ENCODE measurements at regions of chr3 and their contacts with region 1.

Region 1: DNA sequence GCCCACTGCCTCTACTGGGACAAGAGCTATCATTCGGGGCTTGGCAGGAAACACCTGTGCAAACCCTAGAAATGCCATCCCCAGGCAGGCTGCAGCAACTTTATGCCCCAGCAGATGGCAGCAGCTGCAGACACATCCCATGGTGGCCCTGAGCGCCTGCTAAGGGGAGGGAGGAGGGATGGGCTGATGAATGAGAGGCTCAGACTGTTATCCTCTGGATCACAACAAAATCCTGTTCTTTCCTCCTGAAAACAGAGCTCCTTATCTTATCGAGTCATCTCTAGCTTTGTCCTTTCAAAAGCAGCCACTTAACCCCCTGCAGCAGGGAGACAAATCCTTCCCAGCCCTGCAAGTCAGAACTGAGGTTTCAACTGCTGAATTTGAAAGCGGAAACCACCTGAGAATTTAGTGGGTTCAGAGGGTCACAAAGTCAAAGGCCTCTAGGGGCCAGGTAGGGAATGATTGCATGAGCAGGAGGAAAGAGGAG is 90.6 kb upstream of the PROK2 start:
- DNase-seq: peak; percentile 15
- H3K4me3 ChIP-seq: no peak overlapping the region
- H3K27ac ChIP-seq: no peak overlapping the region
- H3K27me3 ChIP-seq: peaks cover 10% of the 10 kb centered on the region
- CTCF ChIP-seq: peak; percentile 93

Region 2: GRCh38 chr3:71863563-71864190 is 11.8 kb before region 1 on chr3:
- CTCF ChIA-PET with region 1: interaction called, 17 read pairs
- POLR2A ChIA-PET with region 1: no interaction called
- DNase-seq: no peak
- H3K4me3 ChIP-seq: no peak overlapping the region
- H3K27ac ChIP-seq: no peak overlapping the region
- H3K27me3 ChIP-seq: no peaks in the 10 kb centered on the region
- CTCF ChIP-seq: no peak

Region 3: GRCh38 chr3:71891483-71891882 is 16.0 kb after region 1 on chr3:
- CTCF ChIA-PET with region 1: interaction called, 11 read pairs
- POLR2A ChIA-PET with region 1: no interaction called
- DNase-seq: no peak
- H3K4me3 ChIP-seq: no peak overlapping the region
- H3K27ac ChIP-seq: no peak overlapping the region
- H3K27me3 ChIP-seq: no peaks in the 10 kb centered on the region
- CTCF ChIP-seq: no peak

Measured in AG04450 (cell line).